Spleen (tissue), 13 donors: ENCODE measurements at regions of chr19 and their contacts with region 1.

Region 1: GRCh38 chr19:46392243-46392801 is 21.0 kb downstream of the CCDC8 start:
- DNase-seq: peak; percentile 65
- H3K4me3 ChIP-seq: no peak overlapping the region
- H3K27ac ChIP-seq: peak overlapping the region in 4 of 8 donors; percentile 3 to 27 (median 14)
- H3K4me1 ChIP-seq: peaks cover 0 to 28% (median 2%) of the 10 kb centered on the region in 6 donors
- H3K27me3 ChIP-seq: no peaks in the 10 kb centered on the region
- CTCF ChIP-seq: no peak
- POLR2A ChIP-seq: no peak

Region 2: GRCh38 chr19:46513461-46514236 is 121.3 kb after region 1 on chr19:
- intact Hi-C with region 1: loop called (anchors 10 kb)
- DNase-seq: peak; percentile 94
- H3K4me3 ChIP-seq: no peak overlapping the region
- H3K27ac ChIP-seq: no peak overlapping the region
- H3K4me1 ChIP-seq: peaks cover 0 to 16% (median 11%) of the 10 kb centered on the region in 6 donors
- H3K27me3 ChIP-seq: peaks cover 0 to 33% (median 7%) of the 10 kb centered on the region in 7 donors
- CTCF ChIP-seq: peak; percentile 70 to 95 (median 89)
- POLR2A ChIP-seq: no peak